AG04450 (cell line): ENCODE measurements at regions of chr21 and their contacts with region 1.

Region 1: DNA sequence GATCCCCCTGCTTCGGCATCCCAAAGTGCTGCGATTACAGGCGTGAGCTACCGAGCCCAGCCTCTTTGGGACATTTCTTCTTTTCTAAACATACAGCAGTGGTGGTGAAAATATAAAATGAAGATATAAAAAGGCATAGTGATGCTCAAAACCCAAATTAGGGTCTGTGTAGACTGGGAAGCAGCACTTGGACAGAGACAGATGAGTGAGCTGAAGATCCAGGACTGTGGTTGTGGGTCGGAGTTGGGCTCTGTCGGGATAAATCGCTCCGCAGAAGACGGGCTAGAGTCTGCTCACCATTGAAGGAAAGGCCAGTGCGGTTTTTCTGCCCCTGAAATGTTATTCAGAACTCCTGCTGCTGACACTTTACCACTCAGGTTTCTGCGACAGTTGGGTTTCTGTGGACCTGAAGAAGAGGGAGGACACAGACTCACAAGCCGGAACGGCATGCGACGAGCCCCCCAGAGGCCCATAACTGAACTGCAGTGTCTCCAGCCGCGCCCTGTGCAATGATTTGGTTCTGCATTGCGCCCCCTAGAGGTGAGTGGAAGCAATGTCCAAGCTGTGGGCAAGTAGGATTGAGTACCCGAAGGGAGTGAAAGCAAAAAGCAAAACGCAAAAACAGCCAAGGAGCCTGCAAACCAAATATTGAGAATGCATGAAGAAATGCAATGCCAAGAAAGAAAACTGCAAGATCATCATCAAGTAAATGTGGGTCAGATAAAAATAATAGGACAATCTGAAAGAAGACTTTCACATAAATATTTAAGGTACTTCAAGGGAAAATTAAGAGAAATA is 66.6 kb downstream of the GABPA start:
- DNase-seq: peak; percentile 57
- H3K4me3 ChIP-seq: no peak overlapping the region; the same call in 1 of the 2 replicates
- H3K27ac ChIP-seq: no peak overlapping the region
- H3K27me3 ChIP-seq: no peaks in the 10 kb centered on the region
- CTCF ChIP-seq: peak; percentile 97

Region 2: DNA sequence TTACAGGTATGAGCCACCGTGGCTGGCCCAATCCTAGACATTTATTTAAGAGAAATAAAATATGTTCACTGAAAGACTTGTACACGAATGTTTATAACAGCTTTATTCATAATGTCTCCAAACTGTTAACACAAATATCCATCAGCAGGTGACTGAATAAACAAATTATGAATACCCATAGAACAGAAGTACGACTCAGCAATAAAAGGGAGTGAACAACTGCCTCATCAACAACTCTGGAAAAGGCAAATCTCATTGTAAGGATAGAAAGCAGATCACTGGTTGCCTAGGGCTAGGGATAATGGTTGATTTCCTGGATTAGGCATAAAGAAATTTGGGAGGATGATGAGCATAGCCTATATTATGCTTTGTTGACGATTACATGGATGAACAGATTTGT is 25.0 kb before region 1 on chr21:
- CTCF ChIA-PET with region 1: interaction called, 20 read pairs
- POLR2A ChIA-PET with region 1: no interaction called
- DNase-seq: no peak
- H3K4me3 ChIP-seq: no peak overlapping the region
- H3K27ac ChIP-seq: no peak overlapping the region
- H3K27me3 ChIP-seq: no peaks in the 10 kb centered on the region
- CTCF ChIP-seq: no peak

Region 3: DNA sequence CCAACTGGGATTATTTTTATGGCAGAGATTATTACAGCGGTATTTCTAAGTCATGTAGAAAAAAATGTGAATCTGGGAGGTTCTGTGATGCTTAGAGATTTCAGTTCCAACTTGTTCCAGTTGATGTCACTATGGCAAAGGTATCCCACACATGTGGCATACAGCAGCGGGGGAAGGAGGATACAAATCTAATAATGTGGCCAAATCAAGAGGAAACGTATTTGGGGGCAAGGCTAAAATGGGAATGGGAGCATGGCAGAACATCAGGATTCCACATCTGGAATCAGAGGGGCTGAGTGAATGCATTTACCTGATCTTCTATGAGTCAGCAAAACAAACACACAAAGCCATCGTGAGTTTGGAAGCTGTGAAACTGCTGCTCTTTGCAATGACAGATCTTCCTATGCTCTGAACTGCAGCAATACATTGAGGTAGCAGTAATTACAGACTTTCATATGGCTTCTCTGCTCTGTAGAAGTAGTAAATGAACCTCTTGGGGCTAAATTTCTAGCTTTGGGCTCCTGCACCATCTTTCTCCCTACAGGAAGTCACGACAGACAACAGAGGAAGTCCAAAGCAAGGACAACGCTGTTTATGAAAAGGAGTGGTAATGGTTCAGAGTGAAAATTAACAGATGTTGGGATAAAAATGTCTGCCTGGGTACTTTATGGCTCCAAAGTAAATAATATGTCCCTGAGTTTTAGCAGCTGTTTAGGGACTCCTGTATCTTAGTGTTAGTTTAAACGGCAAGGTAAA is 11.1 kb before region 1 on chr21:
- CTCF ChIA-PET with region 1: interaction called, 10 read pairs
- POLR2A ChIA-PET with region 1: no interaction called
- DNase-seq: no peak
- H3K4me3 ChIP-seq: peak overlapping the region; percentile 41
- H3K27ac ChIP-seq: no peak overlapping the region
- H3K27me3 ChIP-seq: no peaks in the 10 kb centered on the region
- CTCF ChIP-seq: peak; percentile 42

Region 4: DNA sequence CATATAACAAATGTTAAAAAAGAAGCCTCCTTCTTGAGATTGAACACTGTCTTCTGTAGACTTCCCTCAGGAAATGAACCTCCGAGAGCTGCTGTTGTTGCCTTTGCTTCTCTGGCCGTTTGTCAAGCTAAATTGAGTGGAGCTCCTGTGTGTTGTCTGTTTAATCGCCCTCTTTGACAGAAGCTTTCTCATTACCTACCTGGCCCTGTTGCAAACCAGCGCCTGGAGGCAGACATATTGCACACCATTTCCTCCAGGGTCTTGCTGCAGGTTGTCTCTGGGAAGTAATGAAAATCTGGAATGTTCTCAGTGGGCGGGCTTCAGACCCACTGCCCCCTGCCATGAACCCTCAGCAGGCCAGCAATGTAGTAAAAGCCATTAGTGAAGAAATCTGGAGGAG is 16.7 kb after region 1 on chr21:
- CTCF ChIA-PET with region 1: interaction called, 17 read pairs
- POLR2A ChIA-PET with region 1: no interaction called
- DNase-seq: no peak
- H3K4me3 ChIP-seq: no peak overlapping the region
- H3K27ac ChIP-seq: no peak overlapping the region
- H3K27me3 ChIP-seq: peaks cover 7% of the 10 kb centered on the region
- CTCF ChIP-seq: no peak